Activated T-helper 2 cell treated with anti-CD3 and anti-CD28 coated beads, Interferon-gamma antibody, Interleukin-2, Interleukin-4, amounts not matched to agents 10 μg/mL and 5 μg/mL and 100 μg/mL, durations not matched to agents 14 hours and 24 hours and 36 hours (primary cell): ENCODE measurements at regions of chr6 and their contacts with region 1.

Region 1: GRCh38 chr6:105646391-105646867 is 243.5 kb upstream of the PREP start:
- DNase-seq: peak; percentile 66
- H3K4me3 Mint-ChIP-seq: peak overlapping the region; percentile 22
- H3K27ac Mint-ChIP-seq: peak overlapping the region; percentile 84
- H3K4me1 Mint-ChIP-seq: peaks cover 81% of the 10 kb centered on the region
- H3K27me3 Mint-ChIP-seq: no peaks in the 10 kb centered on the region

Region 2: DNA sequence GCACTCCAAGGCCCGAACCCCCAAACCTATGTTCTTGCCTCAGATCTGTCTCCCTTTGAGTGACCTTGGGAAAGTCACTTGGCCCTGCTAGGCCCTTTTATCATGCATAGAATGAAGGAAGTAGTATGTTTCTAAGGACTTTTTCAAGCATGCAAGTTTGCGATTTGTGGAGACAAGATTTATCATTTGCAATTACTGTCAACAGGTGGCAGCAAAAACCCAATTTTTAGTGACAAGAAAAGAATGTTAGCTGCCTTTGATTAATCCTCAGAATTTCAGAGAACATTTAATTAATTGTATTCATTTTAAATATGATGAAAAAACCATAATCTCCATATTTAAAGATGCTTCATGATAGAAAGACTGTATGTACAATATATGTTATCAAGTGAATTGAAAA is 215.2 kb before region 1 on chr6:
- intact Hi-C with region 1: loop called (anchors 10 kb)
- DNase-seq: no peak
- H3K4me3 Mint-ChIP-seq: no peak overlapping the region
- H3K27ac Mint-ChIP-seq: no peak overlapping the region
- H3K4me1 Mint-ChIP-seq: peaks cover 6% of the 10 kb centered on the region
- H3K27me3 Mint-ChIP-seq: peaks cover 26% of the 10 kb centered on the region

Region 3: DNA sequence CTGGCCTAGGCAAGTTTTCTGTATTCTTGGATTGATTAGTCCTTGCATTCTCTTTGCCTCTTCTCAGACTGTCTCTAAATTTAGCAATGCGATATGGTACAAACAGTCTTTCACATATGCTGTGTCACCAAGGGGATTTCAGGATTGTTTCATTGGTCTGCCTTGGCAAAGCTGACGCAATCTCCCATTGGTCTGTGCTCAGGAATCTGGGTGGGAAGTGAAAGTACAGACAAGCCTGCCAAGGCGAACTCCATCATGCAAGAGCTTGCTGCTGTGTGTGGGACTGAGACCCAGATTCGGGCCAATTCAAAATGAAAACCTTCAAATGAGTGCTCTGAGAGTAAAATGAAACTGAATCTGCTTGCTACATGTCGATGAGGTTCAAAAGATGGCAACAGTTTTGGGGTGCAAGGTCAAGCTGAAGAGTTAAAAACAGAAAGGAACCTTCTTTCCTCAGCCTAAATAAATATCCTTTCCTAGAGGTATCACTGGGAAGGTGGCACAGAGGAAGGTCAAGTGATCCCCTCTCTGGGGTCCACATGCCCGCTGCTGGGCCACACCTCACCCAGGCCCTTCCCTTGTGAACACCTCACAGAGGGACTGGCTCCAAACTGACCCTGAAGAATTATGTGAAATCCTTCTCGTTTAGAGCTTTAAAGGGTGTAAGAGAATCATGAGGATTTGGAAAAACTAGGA is 44.7 kb before region 1 on chr6:
- intact Hi-C with region 1: loop called (anchors 1 kb)
- DNase-seq: peak; percentile 19
- H3K4me3 Mint-ChIP-seq: peak overlapping the region; percentile 34
- H3K27ac Mint-ChIP-seq: peak overlapping the region; percentile 69
- H3K4me1 Mint-ChIP-seq: peaks cover 28% of the 10 kb centered on the region
- H3K27me3 Mint-ChIP-seq: no peaks in the 10 kb centered on the region

Region 4: GRCh38 chr6:105786890-105787655 is 140.6 kb after region 1 on chr6:
- intact Hi-C with region 1: loop called (anchors 1 kb)
- DNase-seq: peak; percentile 36
- H3K4me3 Mint-ChIP-seq: no peak overlapping the region
- H3K27ac Mint-ChIP-seq: peak overlapping the region; percentile 44
- H3K4me1 Mint-ChIP-seq: peaks cover 75% of the 10 kb centered on the region
- H3K27me3 Mint-ChIP-seq: no peaks in the 10 kb centered on the region

Region 5: DNA sequence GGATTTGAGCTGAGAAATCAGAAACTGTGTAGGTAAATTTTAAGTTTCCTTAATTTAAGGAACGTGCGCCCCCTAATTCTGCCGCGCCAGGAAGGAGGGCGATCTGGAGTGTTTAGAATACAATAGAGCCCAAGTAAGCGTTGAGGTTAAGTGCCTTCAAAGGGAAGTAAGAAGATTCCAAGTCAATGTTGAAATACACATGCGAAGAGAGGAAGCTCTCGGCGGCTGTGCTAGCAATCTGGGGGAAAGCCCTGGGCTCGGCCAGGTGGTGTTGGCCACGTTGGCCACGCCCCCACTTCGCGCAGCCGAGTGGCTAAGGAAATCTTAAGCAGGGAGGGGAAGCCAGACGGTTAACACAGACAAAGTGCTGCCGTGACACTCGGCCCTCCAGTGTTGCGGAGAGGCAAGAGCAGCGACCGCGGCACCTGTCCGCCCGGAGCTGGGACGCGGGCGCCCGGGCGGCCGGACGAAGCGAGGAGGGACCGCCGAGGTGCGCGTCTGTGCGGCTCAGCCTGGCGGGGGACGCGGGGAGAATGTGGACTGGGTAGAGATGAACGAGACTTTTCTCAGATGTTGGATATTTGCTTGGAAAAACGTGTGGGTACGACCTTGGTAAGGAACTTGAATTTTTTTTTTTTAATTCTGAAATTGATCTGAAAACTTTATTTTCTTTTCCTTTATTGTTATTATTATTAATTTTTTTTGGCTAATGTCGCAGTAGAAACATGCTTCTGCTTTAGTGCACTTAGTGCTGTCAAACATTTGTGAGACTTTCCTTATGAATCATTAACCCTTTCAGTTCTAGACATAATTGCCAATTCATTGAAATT is 439.8 kb after region 1 on chr6 and contains the start of gene PRDM1:
- intact Hi-C with region 1: loop called (anchors 5 kb)
- DNase-seq: peak; percentile 78
- H3K4me3 Mint-ChIP-seq: peak within 1 kb of the TSS; percentile 89
- H3K27ac Mint-ChIP-seq: peak within 1 kb of the TSS; percentile 64
- H3K4me1 Mint-ChIP-seq: peaks cover 76% of the 10 kb centered on the region
- H3K27me3 Mint-ChIP-seq: peaks cover 5% of the 10 kb centered on the region
- total RNA-seq, gene PRDM1: 49.1 and 52.3 TPM in 2 replicates

Region 6: GRCh38 chr6:106287205-106287604 is 640.8 kb after region 1 on chr6:
- intact Hi-C with region 1: loop called (anchors 10 kb)
- DNase-seq: no peak
- H3K4me3 Mint-ChIP-seq: no peak overlapping the region
- H3K27ac Mint-ChIP-seq: no peak overlapping the region
- H3K4me1 Mint-ChIP-seq: peaks cover 13% of the 10 kb centered on the region
- H3K27me3 Mint-ChIP-seq: no peaks in the 10 kb centered on the region